CD4-positive, alpha-beta memory T cell (primary cell): ENCODE measurements at regions of chr12 and their contacts with region 1.

Region 1: GRCh38 chr12:15590180-15590826 is 198.9 kb downstream of the EPS8 start:
- DNase-seq: peak; percentile 53 to 66 (median 63)
- H3K4me3 ChIP-seq: no peak overlapping the region
- H3K4me3 Mint-ChIP-seq: peak overlapping the region; percentile 68 to 88 (median 80)
- H3K27ac ChIP-seq: no peak overlapping the region
- H3K27ac Mint-ChIP-seq: peak overlapping the region in 6 of 7 donors; percentile 28 to 90 (median 40)
- H3K4me1 ChIP-seq: peaks cover 9% of the 10 kb centered on the region
- H3K4me1 Mint-ChIP-seq: peaks cover 3 to 10% (median 8%) of the 10 kb centered on the region in 4 donors
- H3K27me3 ChIP-seq: no peaks in the 10 kb centered on the region
- H3K27me3 Mint-ChIP-seq: peaks cover 3 to 5% of the 10 kb centered on the region in 2 donors

Region 2: DNA sequence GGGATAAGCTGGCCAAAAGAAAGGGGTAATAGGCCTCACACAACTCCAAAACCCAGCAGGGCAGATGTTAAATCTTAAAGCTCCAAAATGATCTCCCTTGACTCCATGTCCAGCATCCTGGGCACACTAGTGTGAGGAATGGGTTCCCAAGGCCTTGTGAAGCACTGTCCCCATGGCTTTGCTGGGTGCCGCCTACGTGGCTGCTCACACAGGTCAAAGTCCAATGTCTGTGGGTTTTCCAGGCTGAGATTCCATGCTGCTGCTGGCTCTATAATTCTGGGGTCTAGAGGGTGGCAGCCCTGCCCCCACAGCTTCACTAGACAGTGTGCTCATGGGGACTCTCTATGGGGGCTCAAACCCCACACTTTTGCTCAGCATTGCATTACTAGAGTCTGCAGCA is 1463.6 kb before region 1 on chr12:
- CTCF ChIA-PET with region 1: no interaction called
- POLR2A ChIA-PET with region 1: no interaction called
- intact Hi-C with region 1: no loop called
- DNase-seq: no peak
- H3K4me3 ChIP-seq: no peak overlapping the region
- H3K4me3 Mint-ChIP-seq: no peak overlapping the region
- H3K27ac ChIP-seq: no peak overlapping the region
- H3K27ac Mint-ChIP-seq: no peak overlapping the region
- H3K4me1 ChIP-seq: no peaks in the 10 kb centered on the region
- H3K4me1 Mint-ChIP-seq: no peaks in the 10 kb centered on the region
- H3K27me3 ChIP-seq: no peaks in the 10 kb centered on the region
- H3K27me3 Mint-ChIP-seq: peaks cover 3% of the 10 kb centered on the region in 2 donors

Region 3: GRCh38 chr12:15446807-15447206 is 143.5 kb before region 1 on chr12:
- CTCF ChIA-PET with region 1: no interaction called
- POLR2A ChIA-PET with region 1: no interaction called
- intact Hi-C with region 1: no loop called
- DNase-seq: no peak
- H3K4me3 ChIP-seq: no peak overlapping the region
- H3K4me3 Mint-ChIP-seq: no peak overlapping the region
- H3K27ac ChIP-seq: no peak overlapping the region
- H3K27ac Mint-ChIP-seq: no peak overlapping the region
- H3K4me1 ChIP-seq: no peaks in the 10 kb centered on the region
- H3K4me1 Mint-ChIP-seq: no peaks in the 10 kb centered on the region
- H3K27me3 ChIP-seq: no peaks in the 10 kb centered on the region
- H3K27me3 Mint-ChIP-seq: peaks cover 0 to 9% of the 10 kb centered on the region in 2 donors

Region 4: DNA sequence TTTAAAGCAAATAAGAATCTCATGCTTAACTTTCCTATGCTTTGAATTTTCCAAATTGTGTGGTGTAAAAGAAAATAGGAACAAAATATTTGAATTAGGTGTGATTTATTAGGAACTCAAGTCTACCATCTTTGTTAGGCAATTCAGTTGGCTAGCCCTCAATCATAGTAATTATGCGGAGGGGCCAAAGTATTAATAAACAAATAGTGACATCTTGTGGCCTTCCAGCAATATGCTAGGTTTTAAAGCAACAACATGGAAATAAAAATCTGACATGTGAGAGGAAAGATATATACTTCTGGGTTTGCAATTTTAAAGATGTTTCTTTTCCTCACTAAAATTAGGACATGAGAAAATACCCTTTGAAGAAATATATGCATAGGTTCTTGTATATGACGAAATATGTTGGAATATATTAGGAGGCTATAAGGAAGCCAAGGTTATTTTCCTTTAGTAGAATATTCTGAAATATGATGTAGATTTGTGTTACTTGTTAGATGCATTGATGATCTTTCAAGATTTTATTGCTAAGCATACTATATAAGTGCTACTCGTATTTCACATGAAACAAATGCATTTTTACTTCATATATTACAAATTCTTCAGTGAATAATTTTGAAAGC is 67.6 kb before region 1 on chr12:
- CTCF ChIA-PET with region 1: interaction called, 23 read pairs
- POLR2A ChIA-PET with region 1: no interaction called
- intact Hi-C with region 1: no loop called
- DNase-seq: peak in 1 of 5 donors; percentile 24
- H3K4me3 ChIP-seq: no peak overlapping the region
- H3K4me3 Mint-ChIP-seq: no peak overlapping the region
- H3K27ac ChIP-seq: no peak overlapping the region
- H3K27ac Mint-ChIP-seq: no peak overlapping the region
- H3K4me1 ChIP-seq: no peaks in the 10 kb centered on the region
- H3K4me1 Mint-ChIP-seq: no peaks in the 10 kb centered on the region
- H3K27me3 ChIP-seq: no peaks in the 10 kb centered on the region
- H3K27me3 Mint-ChIP-seq: peaks cover 10 to 33% of the 10 kb centered on the region in 2 donors

Region 5: DNA sequence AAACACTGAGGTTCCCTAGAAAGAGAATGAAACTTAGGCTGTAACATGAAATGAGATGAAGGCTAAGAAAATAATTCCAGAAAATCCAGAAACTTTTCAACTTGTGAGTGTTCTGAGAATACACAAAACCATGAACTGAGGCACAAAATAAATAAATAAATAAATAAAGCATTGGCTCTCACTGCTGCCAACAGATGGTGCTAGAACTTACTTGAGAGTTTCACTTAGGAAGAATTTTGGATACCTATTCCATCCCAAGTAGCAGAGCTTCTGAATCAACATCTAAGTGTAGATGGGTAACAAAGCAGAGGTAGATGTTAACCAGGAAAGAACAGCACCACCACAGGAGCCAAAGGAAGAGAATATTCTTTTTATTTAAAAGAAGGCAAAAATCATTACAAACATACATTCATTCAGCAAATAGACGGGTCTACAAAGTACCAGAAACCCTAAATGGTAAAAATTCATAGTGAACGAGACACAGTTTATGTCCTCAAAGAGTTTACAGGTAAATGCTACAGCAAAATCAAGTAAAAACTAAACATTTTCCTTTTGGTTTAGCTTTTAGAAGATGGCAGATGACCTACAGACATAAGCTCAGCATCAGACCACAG is 182.2 kb after region 1 on chr12:
- CTCF ChIA-PET with region 1: interaction called, 3 read pairs
- POLR2A ChIA-PET with region 1: no interaction called
- intact Hi-C with region 1: loop called (anchors 5 kb)
- DNase-seq: peak in 3 of 5 donors; percentile 9 to 26 (median 14)
- H3K4me3 ChIP-seq: no peak overlapping the region
- H3K4me3 Mint-ChIP-seq: no peak overlapping the region
- H3K27ac ChIP-seq: no peak overlapping the region
- H3K27ac Mint-ChIP-seq: no peak overlapping the region
- H3K4me1 ChIP-seq: no peaks in the 10 kb centered on the region
- H3K4me1 Mint-ChIP-seq: peaks cover 0 to 4% (median 1%) of the 10 kb centered on the region in 4 donors
- H3K27me3 ChIP-seq: no peaks in the 10 kb centered on the region
- H3K27me3 Mint-ChIP-seq: peaks cover 3 to 8% of the 10 kb centered on the region in 2 donors

Region 6: GRCh38 chr12:15789220-15790171 is 199.2 kb after region 1 on chr12 and contains the start of gene EPS8:
- CTCF ChIA-PET with region 1: no interaction called
- POLR2A ChIA-PET with region 1: interaction called, 3 read pairs
- intact Hi-C with region 1: loop called (anchors 5 kb)
- DNase-seq: peak; percentile 85 to 90 (median 90)
- H3K4me3 ChIP-seq: peak within 1 kb of the TSS; percentile 58 to 78
- H3K4me3 Mint-ChIP-seq: peak within 1 kb of the TSS; percentile 90 to 98 (median 96)
- H3K27ac ChIP-seq: peak within 1 kb of the TSS; percentile 38
- H3K27ac Mint-ChIP-seq: peak within 1 kb of the TSS; percentile 86 to 93 (median 90)
- H3K4me1 ChIP-seq: peaks cover 19% of the 10 kb centered on the region
- H3K4me1 Mint-ChIP-seq: peaks cover 12 to 19% (median 15%) of the 10 kb centered on the region in 4 donors
- H3K27me3 ChIP-seq: peaks cover 21% of the 10 kb centered on the region
- H3K27me3 Mint-ChIP-seq: peaks cover 12 to 29% of the 10 kb centered on the region in 2 donors
- total RNA-seq, gene EPS8: 2.6 to 3.8 TPM

Region 7: GRCh38 chr12:15863984-15864383 is 273.7 kb after region 1 on chr12:
- CTCF ChIA-PET with region 1: interaction called, 69 read pairs
- POLR2A ChIA-PET with region 1: no interaction called
- intact Hi-C with region 1: no loop called
- DNase-seq: no peak
- H3K4me3 ChIP-seq: no peak overlapping the region
- H3K4me3 Mint-ChIP-seq: peak overlapping the region in 7 of 8 donors; percentile 14 to 43 (median 32)
- H3K27ac ChIP-seq: no peak overlapping the region
- H3K27ac Mint-ChIP-seq: no peak overlapping the region
- H3K4me1 ChIP-seq: no peaks in the 10 kb centered on the region
- H3K4me1 Mint-ChIP-seq: peaks cover 0 to 5% (median 4%) of the 10 kb centered on the region in 4 donors
- H3K27me3 ChIP-seq: no peaks in the 10 kb centered on the region
- H3K27me3 Mint-ChIP-seq: peaks cover 11 to 27% of the 10 kb centered on the region in 2 donors